ENCODE measurements at regions of chr10 and their contacts with region 1.

Region 1: DNA sequence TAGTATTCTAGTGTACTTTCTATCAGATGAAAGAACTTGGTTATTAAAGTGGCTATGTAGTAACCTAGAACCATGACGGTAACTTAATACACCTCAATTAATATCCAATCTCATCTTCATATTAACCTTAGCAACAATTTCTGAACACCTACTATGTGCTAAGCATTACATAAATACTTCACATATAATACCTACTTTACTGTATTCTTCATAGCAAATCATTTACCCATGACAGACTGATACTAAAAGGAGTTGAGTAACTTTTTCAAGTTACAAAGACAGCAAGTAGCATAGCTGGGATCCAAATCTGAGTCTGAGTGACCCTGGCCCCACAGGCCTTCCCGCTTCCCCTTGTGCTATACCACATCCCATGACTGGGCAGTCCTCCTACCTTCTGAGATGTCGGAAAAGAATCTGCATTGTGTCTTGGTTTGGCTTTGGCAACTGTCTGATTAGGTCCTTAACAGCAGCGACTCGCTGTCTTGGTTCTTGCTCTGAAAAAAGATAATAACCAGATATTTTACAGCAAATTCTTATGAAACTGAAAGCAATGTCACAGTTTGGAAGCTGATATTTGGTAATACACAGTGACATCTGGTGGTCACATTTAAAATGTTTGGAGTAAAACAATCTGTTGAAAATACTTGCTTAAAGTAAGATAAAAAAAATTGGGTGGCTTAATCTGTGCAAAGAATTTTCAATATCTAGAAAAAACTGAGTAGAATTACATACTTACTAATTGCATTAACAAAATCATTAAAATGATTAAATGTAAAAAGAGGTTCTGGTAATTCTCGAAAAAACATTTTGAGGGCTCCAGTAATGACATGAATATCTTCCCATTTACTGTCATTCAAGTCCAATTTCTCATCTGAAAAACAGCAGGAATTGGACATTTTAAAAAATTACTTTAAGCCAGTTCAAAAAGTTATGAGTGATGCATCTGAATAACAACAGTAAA is 120.1 kb downstream of the ARHGAP12 start:
- DNase-seq: peak in 1 of 2 donors; percentile 64
- ATAC-seq: peak; percentile 80
- H3K4me3 ChIP-seq: no peak overlapping the region
- H3K27ac ChIP-seq: no peak overlapping the region
- H3K4me1 ChIP-seq: no peaks in the 10 kb centered on the region
- H3K27me3 ChIP-seq: no peaks in the 10 kb centered on the region

Region 2: DNA sequence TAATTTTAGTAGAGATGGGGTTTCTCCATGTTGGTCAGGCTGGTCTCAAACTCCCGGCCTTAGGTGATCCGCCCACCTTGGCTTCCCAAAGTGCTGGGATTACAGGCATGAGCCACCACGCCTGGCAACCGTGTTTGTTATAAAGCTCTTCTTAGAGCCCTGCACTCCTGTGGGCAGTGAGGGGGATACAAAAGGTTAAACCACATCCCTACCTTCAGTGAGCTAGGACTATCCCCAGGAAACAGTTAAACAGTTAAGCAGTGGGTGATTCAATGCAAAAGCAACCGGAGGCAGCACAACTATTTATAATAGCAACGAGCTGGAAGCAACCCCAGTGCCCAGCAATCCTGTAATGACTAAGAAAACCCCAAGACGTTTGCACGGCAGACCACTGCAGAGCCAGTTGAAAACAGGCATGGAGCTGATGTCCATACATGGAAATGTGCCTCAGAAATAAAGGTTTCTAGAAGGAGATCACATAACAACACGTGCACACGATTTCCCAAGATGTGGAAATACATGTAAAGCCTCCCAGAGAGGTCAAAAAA is 1071.8 kb before region 1 on chr10:
- intact Hi-C with region 1: loop called in 1 of 2 experiments (anchors 10 kb)
- DNase-seq: peak; percentile 81 to 84
- ATAC-seq: peak; percentile 84
- H3K4me3 ChIP-seq: no peak overlapping the region
- H3K27ac ChIP-seq: peak overlapping the region in 1 of 2 donors; percentile 12
- H3K4me1 ChIP-seq: peaks cover 0 to 3% of the 10 kb centered on the region in 2 donors
- H3K27me3 ChIP-seq: no peaks in the 10 kb centered on the region

Region 3: DNA sequence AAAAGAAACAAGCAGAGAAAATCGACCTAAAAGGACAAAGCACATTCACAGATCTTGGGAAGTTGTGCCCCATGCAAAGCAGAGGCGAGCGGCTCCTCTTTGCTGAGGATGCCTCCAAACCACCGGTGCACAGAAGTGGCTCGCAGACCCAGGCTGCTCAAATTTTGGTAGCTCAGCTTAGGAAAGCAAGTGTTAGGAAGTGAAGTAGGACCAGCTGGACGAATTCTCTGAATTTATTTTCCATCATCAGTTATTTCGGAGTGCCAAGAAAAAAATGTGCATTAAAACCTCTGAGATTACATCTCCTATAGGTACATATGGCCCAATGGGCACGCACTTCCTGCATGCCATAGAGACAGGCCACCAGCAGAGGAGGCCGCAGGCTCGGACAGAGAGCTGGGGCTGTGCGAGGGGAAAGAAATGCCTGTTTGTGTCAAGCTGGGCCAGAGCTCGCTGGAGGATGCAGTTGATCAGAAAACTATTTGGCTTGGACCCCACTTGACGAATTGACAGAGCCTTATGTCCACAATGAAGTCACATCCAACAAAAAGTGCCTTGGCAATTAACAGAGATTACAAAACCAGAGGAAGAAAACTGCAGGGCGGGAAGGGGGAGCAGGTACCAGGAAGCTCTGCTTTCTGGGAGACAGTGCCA is 1056.7 kb before region 1 on chr10:
- intact Hi-C with region 1: loop called in 1 of 2 experiments (anchors 10 kb)
- DNase-seq: peak; percentile 76 to 93
- ATAC-seq: peak; percentile 85
- H3K4me3 ChIP-seq: no peak overlapping the region
- H3K27ac ChIP-seq: no peak overlapping the region
- H3K4me1 ChIP-seq: no peaks in the 10 kb centered on the region
- H3K27me3 ChIP-seq: no peaks in the 10 kb centered on the region

Region 4: DNA sequence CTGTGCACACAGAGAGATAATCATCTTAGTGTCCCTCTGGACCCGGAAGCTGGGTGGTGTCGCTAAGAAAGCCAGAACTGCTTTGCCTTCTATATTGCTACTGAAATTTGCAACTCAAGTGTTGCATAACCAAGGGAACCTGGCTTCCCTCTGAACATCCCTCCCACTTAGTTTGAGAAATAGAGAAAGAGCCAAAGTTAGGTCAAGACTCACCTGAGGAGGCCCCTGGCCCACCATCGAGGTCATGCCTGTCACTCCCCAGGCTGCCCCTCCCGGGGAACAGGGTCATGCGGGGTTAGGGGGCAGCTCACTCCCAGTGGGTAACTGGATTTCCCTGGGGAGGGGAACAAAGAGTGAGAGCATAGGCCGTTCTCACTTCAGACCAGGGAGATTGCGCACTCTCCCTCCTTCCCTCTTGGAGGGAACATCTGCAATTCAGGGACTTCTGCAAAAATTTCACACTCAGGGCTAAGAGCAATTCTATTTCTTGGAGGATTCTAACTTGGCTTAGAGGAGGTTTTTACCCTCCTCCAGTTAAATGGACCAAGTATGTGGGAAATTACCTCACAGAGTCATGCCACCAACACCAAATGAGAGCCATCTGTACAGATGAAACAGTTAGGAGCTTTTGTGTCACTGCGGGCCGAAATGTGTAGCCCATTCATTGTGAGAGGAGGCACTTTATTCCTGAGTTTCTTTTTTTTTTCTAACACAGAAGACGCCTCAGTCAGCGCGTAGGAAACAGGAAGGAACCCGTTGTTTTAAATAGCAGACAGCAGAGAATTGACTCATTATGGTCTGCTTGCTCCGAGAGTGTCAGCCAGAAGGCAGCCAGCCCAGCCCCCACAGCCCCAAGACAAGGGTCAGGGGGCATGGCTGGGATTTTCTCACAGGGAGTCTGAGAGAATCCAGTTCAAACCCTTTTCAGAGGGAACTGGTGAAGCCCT is 101.2 kb before region 1 on chr10:
- intact Hi-C with region 1: loop called in 1 of 2 experiments (anchors 5 kb)
- DNase-seq: peak; percentile 88 to 89
- ATAC-seq: peak; percentile 70
- H3K4me3 ChIP-seq: no peak overlapping the region
- H3K27ac ChIP-seq: no peak overlapping the region
- H3K4me1 ChIP-seq: no peaks in the 10 kb centered on the region
- H3K27me3 ChIP-seq: no peaks in the 10 kb centered on the region